ENCODE measurements at regions of chr22 and their contacts with region 1.

Region 1: DNA sequence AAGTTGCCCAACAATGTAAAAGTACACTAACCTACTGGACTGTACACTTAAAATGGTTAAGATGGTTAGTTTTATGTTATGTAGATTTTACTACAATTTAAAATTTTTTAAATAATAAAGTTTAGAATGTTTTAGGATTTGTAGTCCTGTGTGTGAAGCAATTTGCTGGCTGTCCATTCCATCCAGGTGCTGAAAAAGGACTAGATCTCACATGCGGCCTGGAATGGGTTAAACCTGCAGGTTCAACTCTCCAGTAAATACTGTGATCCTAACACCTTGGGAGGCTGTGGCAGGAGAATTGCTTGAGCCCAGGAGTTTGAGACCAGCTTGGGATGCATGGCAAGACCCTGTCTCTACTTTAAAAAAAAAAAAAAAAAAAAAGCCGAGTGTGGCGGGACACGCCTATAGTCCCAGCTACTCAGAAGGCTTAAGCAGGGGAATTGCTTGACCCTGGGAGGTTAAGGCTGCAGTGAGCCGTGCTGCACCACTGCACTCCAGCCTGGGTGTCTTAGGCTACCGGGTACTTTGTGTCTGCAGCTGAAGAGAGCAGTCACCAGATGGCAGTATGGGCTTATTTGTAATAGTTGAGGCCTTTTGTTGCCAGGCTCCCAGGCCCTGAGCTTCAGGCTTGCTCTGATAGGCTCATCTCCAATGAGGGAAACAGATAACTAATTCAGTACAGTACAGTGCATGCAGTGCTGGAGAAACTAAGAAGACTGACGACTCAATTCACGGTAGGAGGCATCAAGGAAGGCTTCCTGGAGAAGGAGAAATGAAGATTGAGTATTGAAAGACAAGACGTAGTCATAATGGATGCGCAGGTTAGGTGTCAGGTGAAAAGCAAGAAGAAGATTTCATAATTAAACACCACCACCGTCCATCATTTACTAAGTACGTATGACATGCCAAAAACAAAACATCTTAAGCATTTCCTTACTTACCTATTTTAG is 64.7 kb upstream of the ASPHD2 start:
- DNase-seq: peak; percentile 88
- H3K4me3 ChIP-seq: no peak overlapping the region
- H3K27ac ChIP-seq: no peak overlapping the region
- H3K4me1 ChIP-seq: no peaks in the 10 kb centered on the region
- CTCF ChIP-seq: peak; percentile 88

Region 2: GRCh38 chr22:26404851-26405421 is 40.6 kb after region 1 on chr22:
- CTCF ChIA-PET with region 1: no interaction called
- POLR2A ChIA-PET with region 1: no interaction called
- intact Hi-C with region 1: no loop called
- DNase-seq: peak; percentile 25
- H3K4me3 ChIP-seq: no peak overlapping the region
- H3K27ac ChIP-seq: no peak overlapping the region
- H3K4me1 ChIP-seq: peaks cover 7% of the 10 kb centered on the region
- CTCF ChIP-seq: no peak

Region 3: GRCh38 chr22:26461188-26461810 is 97.0 kb after region 1 on chr22:
- CTCF ChIA-PET with region 1: interaction called, 9 read pairs
- POLR2A ChIA-PET with region 1: no interaction called
- intact Hi-C with region 1: loop called (anchors 1 kb)
- DNase-seq: peak; percentile 41
- H3K4me3 ChIP-seq: no peak overlapping the region
- H3K27ac ChIP-seq: no peak overlapping the region
- H3K4me1 ChIP-seq: no peaks in the 10 kb centered on the region
- CTCF ChIP-seq: peak; percentile 93

Region 4: DNA sequence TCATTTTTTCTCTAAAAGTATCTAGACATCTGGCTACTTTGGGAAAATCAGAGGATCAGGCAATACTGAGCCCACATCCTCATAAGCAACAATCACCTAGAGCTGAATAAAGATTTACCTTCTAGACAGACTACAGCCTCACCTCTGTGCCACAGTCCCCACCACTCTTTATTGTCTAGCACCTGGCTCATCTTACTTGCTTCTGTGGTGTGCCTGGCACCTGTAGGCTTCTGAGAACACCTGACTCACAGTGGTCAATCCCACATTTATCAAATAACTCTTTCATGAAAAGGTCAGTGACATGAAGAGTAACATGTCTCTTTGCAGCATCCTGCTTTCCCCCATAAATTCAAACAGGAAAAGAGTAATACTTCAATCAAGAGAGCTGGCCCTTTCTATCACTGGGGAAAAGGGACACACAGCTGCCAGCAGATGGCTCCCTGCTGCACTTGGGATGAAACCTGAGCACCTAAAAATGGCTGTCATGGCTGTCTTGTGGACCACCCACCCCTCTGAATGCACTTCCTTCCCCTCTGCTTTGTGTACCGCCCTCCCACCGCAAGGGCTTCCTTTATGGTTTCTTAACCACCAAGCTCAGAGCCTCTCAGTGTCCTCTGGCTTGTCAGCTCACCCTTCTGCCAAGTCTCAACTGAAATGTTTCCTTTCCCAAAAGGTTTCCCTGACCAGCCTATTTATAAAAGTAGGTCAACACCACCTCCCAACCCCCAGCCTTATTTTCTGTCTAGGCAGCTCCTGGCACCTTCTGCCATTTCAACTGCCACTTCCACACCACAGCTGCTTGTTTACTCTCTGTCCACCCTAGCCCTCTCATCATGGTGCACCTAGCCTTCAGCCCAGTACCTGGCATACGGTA is 138.6 kb after region 1 on chr22:
- CTCF ChIA-PET with region 1: no interaction called
- POLR2A ChIA-PET with region 1: no interaction called
- intact Hi-C with region 1: no loop called
- DNase-seq: peak; percentile 89
- H3K4me3 ChIP-seq: no peak overlapping the region
- H3K27ac ChIP-seq: peak overlapping the region; percentile 58
- H3K4me1 ChIP-seq: peaks cover 23% of the 10 kb centered on the region
- CTCF ChIP-seq: peak; percentile 95

Region 5: DNA sequence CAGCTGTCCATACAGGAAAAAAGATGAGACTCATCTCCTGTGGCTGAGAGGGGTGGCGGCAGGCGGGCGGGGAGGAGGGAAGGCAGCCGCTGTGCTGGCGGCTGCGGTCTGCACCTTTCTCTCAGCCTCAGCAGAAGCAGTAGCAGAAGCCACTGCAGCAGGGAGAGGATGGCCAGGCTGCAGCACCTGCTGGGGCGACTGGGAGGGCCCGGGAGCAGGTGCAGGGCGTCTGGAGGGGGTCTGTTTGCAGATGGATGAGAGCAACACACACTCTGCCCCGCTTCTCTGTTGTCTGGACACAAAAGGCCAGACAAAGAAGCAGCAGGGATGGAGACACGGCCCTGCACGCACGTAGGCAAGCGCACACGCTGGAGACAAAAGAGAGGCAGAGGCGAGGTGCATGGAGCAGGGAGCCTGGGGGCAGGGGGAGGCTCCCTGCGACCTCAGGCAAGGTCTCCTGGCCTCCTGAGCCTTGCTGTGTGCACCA is 283.7 kb after region 1 on chr22:
- CTCF ChIA-PET with region 1: interaction called, 24 read pairs
- POLR2A ChIA-PET with region 1: no interaction called
- intact Hi-C with region 1: no loop called
- DNase-seq: peak; percentile 67
- H3K4me3 ChIP-seq: no peak overlapping the region
- H3K27ac ChIP-seq: no peak overlapping the region
- H3K4me1 ChIP-seq: peaks cover 64% of the 10 kb centered on the region
- CTCF ChIP-seq: no peak